Mammary epithelial cell (primary cell): ENCODE measurements at regions of chr11 and their contacts with region 1.

Region 1: GRCh38 chr11:124499711-124500110 is 43.7 kb downstream of the OR8B12 start:
- DNase-seq: no peak
- H3K4me3 ChIP-seq: no peak overlapping the region
- H3K27ac ChIP-seq: no peak overlapping the region
- H3K4me1 ChIP-seq: no peaks in the 10 kb centered on the region
- H3K27me3 ChIP-seq: no peaks in the 10 kb centered on the region
- CTCF ChIP-seq: no peak

Region 2: DNA sequence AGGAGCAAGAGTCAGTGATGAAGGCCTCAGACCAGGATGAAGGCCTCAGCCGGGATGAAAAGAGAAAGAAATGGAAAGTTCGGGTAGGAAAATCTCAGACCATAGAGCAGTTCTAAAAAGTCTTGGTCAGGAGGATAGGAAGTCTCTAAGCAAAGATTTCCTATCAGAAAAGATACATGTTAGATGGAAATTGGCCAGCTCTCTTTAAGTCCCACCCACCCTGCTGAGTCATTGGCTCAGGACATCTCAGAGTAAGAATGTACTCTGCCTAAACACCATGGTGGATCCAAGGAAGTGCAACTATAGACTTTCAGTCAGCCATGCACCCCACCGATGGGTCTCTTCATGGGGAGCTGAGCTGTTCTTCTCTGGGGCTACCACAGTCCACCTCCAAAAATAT is 105.3 kb before region 1 on chr11:
- CTCF ChIA-PET with region 1: no interaction called
- dilution Hi-C with region 1: no loop called
- in situ Hi-C with region 1: no loop called
- intact Hi-C with region 1: no loop called
- DNase-seq: no peak
- H3K4me3 ChIP-seq: no peak overlapping the region
- H3K27ac ChIP-seq: no peak overlapping the region
- H3K4me1 ChIP-seq: no peaks in the 10 kb centered on the region
- H3K27me3 ChIP-seq: no peaks in the 10 kb centered on the region
- CTCF ChIP-seq: no peak

Region 3: GRCh38 chr11:124556828-124557227 is 57.1 kb after region 1 on chr11:
- CTCF ChIA-PET with region 1: no interaction called
- dilution Hi-C with region 1: no loop called
- in situ Hi-C with region 1: no loop called
- intact Hi-C with region 1: no loop called
- DNase-seq: no peak
- H3K4me3 ChIP-seq: no peak overlapping the region
- H3K27ac ChIP-seq: no peak overlapping the region
- H3K4me1 ChIP-seq: no peaks in the 10 kb centered on the region
- H3K27me3 ChIP-seq: no peaks in the 10 kb centered on the region
- CTCF ChIP-seq: no peak

Region 4: DNA sequence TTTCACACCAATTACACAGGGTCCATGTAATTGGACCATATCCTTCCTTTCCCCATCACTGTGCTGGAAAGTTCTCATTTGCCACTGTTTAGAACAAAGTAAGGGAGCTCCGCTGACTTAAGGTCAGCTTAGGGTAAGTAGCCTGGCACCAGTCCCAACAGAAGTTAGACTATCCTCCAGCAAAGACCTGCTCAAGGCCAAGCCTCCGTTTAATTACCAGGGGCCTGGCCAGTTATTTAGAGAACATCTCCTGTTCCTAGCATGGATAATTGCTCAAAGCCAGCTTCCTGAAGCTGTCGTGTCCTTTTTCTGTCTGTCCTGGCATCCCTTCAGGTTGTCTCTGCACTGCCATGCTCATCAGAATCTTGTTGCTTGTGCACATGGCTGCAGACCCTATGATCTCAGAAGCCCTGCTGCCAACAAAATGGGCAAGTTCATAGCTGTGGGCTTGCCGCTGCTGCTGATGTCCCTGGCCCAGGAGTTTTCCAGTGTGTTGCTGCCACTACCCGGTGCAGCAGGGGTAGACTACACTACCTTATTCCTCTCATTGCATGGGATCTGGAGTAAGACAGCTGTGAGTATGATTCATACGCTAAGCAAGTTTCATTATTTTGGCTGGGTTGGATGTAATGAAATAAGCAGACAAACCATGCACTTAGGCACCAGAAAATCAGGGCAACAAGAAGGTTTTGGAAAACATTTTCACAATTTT is 78.2 kb after region 1 on chr11:
- CTCF ChIA-PET with region 1: no interaction called
- dilution Hi-C with region 1: loop called (anchors 5 kb)
- in situ Hi-C with region 1: no loop called
- intact Hi-C with region 1: no loop called
- DNase-seq: no peak
- H3K4me3 ChIP-seq: no peak overlapping the region
- H3K27ac ChIP-seq: no peak overlapping the region
- H3K4me1 ChIP-seq: no peaks in the 10 kb centered on the region
- H3K27me3 ChIP-seq: peaks cover 2% of the 10 kb centered on the region
- CTCF ChIP-seq: no peak